HepG2 (cell line): ENCODE measurements at regions of chr11 and their contacts with region 1.

Region 1: GRCh38 chr11:100827934-100828661 is 141.0 kb downstream of the ARHGAP42 start:
- DNase-seq: peak; percentile 80
- ATAC-seq: peak; percentile 99
- H3K4me3 ChIP-seq: no peak overlapping the region
- H3K27ac ChIP-seq: no peak overlapping the region
- H3K4me1 ChIP-seq: peaks cover 17% of the 10 kb centered on the region
- H3K27me3 ChIP-seq: no peaks in the 10 kb centered on the region
- CTCF ChIP-seq: peak; percentile 65
- EP300 ChIP-seq: no peak
- POLR2A ChIP-seq: no peak
- RAD21 ChIP-seq: peak; percentile 58

Region 2: GRCh38 chr11:100575870-100576705 is 252.0 kb before region 1 on chr11:
- CTCF ChIA-PET with region 1: interaction called, 7 read pairs
- POLR2A ChIA-PET with region 1: no interaction called
- in situ Hi-C with region 1: no loop called
- intact Hi-C with region 1: loop called (anchors 1 kb)
- DNase-seq: peak; percentile 41
- ATAC-seq: peak; percentile 80
- H3K4me3 ChIP-seq: no peak overlapping the region
- H3K27ac ChIP-seq: no peak overlapping the region
- H3K4me1 ChIP-seq: no peaks in the 10 kb centered on the region
- H3K27me3 ChIP-seq: no peaks in the 10 kb centered on the region
- CTCF ChIP-seq: peak; percentile 73
- EP300 ChIP-seq: no peak
- POLR2A ChIP-seq: no peak
- RAD21 ChIP-seq: peak; percentile 53; the same call in 1 of the 2 replicates

Region 3: GRCh38 chr11:100619484-100619883 is 208.6 kb before region 1 on chr11:
- CTCF ChIA-PET with region 1: no interaction called
- POLR2A ChIA-PET with region 1: no interaction called
- in situ Hi-C with region 1: no loop called
- intact Hi-C with region 1: no loop called
- DNase-seq: no peak
- ATAC-seq: no peak
- H3K4me3 ChIP-seq: no peak overlapping the region
- H3K27ac ChIP-seq: no peak overlapping the region
- H3K4me1 ChIP-seq: no peaks in the 10 kb centered on the region
- H3K27me3 ChIP-seq: no peaks in the 10 kb centered on the region
- CTCF ChIP-seq: no peak
- EP300 ChIP-seq: no peak
- POLR2A ChIP-seq: no peak
- RAD21 ChIP-seq: no peak

Region 4: DNA sequence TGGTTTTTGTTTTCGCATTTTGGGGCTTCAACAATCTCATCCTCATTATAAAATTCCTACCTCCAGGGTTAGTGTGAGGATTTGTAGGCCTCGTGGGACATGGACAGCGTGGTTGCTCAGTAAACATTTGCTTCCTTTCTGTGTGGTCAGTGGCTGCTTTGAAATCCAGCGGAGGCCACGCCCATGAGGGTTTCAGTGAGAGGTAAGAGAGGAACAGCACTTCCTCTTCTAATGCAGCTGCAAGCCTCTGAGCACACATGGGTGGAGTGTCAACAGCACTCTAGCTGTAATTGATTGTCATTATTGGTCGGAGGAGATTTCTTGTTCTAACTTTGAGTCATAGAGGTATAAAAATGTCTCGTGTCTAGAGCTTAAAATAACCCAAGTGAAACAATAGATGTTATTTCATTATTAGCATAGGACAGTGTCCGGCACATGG is 147.0 kb before region 1 on chr11:
- CTCF ChIA-PET with region 1: no interaction called
- POLR2A ChIA-PET with region 1: no interaction called
- in situ Hi-C with region 1: loop called (anchors 10 kb)
- intact Hi-C with region 1: loop called (anchors 2 kb)
- DNase-seq: peak; percentile 76
- ATAC-seq: peak; percentile 90
- H3K4me3 ChIP-seq: no peak overlapping the region
- H3K27ac ChIP-seq: no peak overlapping the region
- H3K4me1 ChIP-seq: peaks cover 38% of the 10 kb centered on the region
- H3K27me3 ChIP-seq: no peaks in the 10 kb centered on the region
- CTCF ChIP-seq: no peak
- EP300 ChIP-seq: no peak; a peak in 1 of 4 replicates
- POLR2A ChIP-seq: no peak
- RAD21 ChIP-seq: no peak

Region 5: DNA sequence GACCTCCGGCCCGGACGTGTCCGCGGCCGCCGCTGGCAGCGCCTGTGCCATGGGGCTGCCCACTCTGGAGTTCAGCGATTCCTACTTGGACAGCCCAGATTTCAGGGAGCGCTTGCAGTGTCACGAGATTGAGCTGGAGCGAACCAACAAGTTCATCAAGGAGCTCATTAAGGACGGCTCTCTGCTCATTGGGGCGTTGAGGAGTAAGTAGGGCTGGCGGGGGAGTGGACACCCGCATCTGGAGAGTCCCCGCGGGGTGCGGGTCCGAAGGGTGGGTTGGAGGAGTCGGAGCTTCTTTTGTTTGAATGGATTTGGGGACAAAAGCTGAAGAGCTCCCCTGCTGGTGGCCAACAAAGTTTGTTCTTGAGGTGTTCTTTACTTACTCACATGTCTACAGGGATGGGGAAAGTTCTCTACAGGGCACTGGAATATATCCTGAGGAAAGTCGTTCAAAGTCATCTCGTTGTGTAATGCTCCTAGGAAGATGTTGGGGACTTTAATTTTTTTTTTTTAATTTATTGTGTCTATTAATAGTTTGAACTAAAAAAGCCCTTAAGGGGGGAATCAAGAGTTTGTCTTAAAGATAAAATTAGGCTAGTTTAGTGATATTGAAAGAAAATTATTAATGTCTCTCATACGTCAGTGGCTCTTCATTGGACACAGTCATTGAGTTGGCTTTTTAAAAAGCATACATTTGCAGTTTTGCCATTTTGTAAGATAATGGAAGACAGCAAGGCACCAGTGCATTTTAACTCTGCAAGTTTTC is 140.3 kb before region 1 on chr11:
- CTCF ChIA-PET with region 1: no interaction called
- POLR2A ChIA-PET with region 1: no interaction called
- in situ Hi-C with region 1: loop called (anchors 10 kb)
- intact Hi-C with region 1: loop called (anchors 2 kb)
- DNase-seq: peak; percentile 55
- ATAC-seq: peak; percentile 81
- H3K4me3 ChIP-seq: peak overlapping the region; percentile 82 to 91 (median 84)
- H3K27ac ChIP-seq: no peak overlapping the region
- H3K4me1 ChIP-seq: peaks cover 34% of the 10 kb centered on the region
- H3K27me3 ChIP-seq: peaks cover 0 to 5% of the 10 kb centered on the region in 2 experiments; a peak in 2 of 5 replicates
- CTCF ChIP-seq: peak; percentile 62
- EP300 ChIP-seq: no peak
- POLR2A ChIP-seq: no peak
- RAD21 ChIP-seq: no peak

Region 6: DNA sequence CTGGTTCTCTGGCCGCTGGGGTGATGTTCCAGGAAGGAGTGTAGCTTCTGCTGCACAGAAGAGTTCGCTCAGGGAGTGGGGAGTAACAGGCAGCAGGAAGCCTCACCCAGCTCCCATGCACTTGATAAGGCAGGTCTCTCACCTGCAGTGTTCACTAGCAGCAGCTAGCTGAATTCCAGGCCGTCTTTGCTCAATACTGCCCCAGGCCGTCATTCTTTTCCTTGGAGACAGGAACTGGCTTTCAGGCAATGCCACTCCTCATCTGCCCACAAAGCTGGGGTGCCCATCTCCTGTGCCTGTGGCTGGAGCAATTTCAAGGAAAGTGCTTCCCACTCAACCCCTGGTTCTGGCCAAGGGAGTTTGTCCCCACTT is 74.9 kb before region 1 on chr11:
- CTCF ChIA-PET with region 1: interaction called, 3 read pairs
- POLR2A ChIA-PET with region 1: no interaction called
- in situ Hi-C with region 1: no loop called
- intact Hi-C with region 1: loop called (anchors 5 kb)
- DNase-seq: no peak
- ATAC-seq: peak; percentile 67
- H3K4me3 ChIP-seq: no peak overlapping the region
- H3K27ac ChIP-seq: no peak overlapping the region
- H3K4me1 ChIP-seq: no peaks in the 10 kb centered on the region
- H3K27me3 ChIP-seq: no peaks in the 10 kb centered on the region
- CTCF ChIP-seq: no peak
- EP300 ChIP-seq: no peak
- POLR2A ChIP-seq: no peak
- RAD21 ChIP-seq: no peak

Region 7: GRCh38 chr11:100776212-100776896 is 51.7 kb before region 1 on chr11:
- CTCF ChIA-PET with region 1: no interaction called
- POLR2A ChIA-PET with region 1: no interaction called
- in situ Hi-C with region 1: no loop called
- intact Hi-C with region 1: loop called (anchors 1 kb)
- DNase-seq: peak; percentile 74
- ATAC-seq: peak; percentile 78
- H3K4me3 ChIP-seq: no peak overlapping the region; a peak in 1 of 6 replicates
- H3K27ac ChIP-seq: peak overlapping the region; percentile 52
- H3K4me1 ChIP-seq: peaks cover 40% of the 10 kb centered on the region
- H3K27me3 ChIP-seq: no peaks in the 10 kb centered on the region
- CTCF ChIP-seq: no peak
- EP300 ChIP-seq: peak in 1 of 2 experiments; percentile 50; a peak in 1 of 4 replicates
- POLR2A ChIP-seq: no peak
- RAD21 ChIP-seq: no peak

Region 8: GRCh38 chr11:100841711-100842407 is 13.8 kb after region 1 on chr11:
- CTCF ChIA-PET with region 1: no interaction called
- POLR2A ChIA-PET with region 1: no interaction called
- in situ Hi-C with region 1: no loop called
- intact Hi-C with region 1: no loop called
- DNase-seq: no peak
- ATAC-seq: no peak
- H3K4me3 ChIP-seq: no peak overlapping the region
- H3K27ac ChIP-seq: no peak overlapping the region
- H3K4me1 ChIP-seq: no peaks in the 10 kb centered on the region; the same call in 1 of the 2 replicates
- H3K27me3 ChIP-seq: no peaks in the 10 kb centered on the region
- CTCF ChIP-seq: no peak
- EP300 ChIP-seq: no peak
- POLR2A ChIP-seq: no peak
- RAD21 ChIP-seq: no peak

Region 9: GRCh38 chr11:100890789-100891188 is 62.7 kb after region 1 on chr11:
- CTCF ChIA-PET with region 1: no interaction called
- POLR2A ChIA-PET with region 1: no interaction called
- in situ Hi-C with region 1: no loop called
- intact Hi-C with region 1: no loop called
- DNase-seq: no peak
- ATAC-seq: no peak
- H3K4me3 ChIP-seq: no peak overlapping the region
- H3K27ac ChIP-seq: no peak overlapping the region
- H3K4me1 ChIP-seq: no peaks in the 10 kb centered on the region
- H3K27me3 ChIP-seq: no peaks in the 10 kb centered on the region
- CTCF ChIP-seq: no peak
- EP300 ChIP-seq: no peak
- POLR2A ChIP-seq: no peak
- RAD21 ChIP-seq: no peak

Region 10: DNA sequence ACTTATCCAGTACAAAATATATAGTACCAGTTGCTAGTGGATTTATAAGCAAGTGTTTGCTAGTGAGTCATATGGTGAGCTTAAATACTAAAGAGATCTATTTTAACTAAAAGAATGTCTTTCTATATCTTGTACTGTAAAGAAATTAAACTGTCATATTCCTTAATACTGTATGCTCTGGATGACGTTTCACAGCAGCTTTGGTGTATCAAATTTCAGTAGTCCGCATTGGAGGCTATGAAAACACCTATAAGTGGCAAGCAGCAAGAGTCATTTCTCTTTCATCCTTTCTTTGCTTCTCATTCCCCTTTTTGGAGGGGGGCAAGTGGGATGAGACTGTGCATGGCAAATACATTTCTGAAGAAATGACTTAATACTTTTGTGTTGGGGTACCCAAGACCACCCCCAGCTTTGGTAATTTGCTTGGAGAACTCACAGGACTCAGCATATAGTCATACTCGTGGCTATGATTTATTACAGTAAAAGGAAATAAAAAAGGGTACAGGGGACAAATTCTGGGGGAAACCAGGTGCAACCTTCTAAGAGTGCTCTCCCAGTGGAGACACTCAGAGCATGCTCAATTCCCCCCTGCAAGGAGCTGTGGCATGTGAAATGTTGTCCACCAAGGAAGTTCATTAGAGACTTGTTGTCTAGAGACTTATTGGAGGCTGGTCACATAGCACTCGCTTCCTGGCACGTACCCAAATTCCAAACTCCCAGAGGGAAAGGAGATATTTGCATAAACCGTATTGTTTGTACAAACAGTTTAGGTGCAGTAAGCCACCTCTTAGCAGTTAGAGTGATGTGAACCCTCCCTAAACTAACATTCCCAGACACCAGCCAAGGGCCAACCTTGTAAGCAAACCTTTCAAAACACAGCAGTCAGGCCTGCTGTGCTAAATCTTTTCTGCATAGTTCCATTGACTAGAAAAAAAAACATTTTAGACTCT is 90.7 kb after region 1 on chr11:
- CTCF ChIA-PET with region 1: no interaction called
- POLR2A ChIA-PET with region 1: no interaction called
- in situ Hi-C with region 1: no loop called
- intact Hi-C with region 1: no loop called
- DNase-seq: no peak
- ATAC-seq: no peak
- H3K4me3 ChIP-seq: no peak overlapping the region
- H3K27ac ChIP-seq: no peak overlapping the region
- H3K4me1 ChIP-seq: no peaks in the 10 kb centered on the region
- H3K27me3 ChIP-seq: no peaks in the 10 kb centered on the region
- CTCF ChIP-seq: no peak
- EP300 ChIP-seq: no peak
- POLR2A ChIP-seq: no peak
- RAD21 ChIP-seq: no peak